ENCODE measurements at regions of chr2 and their contacts with region 1.

Region 1: DNA sequence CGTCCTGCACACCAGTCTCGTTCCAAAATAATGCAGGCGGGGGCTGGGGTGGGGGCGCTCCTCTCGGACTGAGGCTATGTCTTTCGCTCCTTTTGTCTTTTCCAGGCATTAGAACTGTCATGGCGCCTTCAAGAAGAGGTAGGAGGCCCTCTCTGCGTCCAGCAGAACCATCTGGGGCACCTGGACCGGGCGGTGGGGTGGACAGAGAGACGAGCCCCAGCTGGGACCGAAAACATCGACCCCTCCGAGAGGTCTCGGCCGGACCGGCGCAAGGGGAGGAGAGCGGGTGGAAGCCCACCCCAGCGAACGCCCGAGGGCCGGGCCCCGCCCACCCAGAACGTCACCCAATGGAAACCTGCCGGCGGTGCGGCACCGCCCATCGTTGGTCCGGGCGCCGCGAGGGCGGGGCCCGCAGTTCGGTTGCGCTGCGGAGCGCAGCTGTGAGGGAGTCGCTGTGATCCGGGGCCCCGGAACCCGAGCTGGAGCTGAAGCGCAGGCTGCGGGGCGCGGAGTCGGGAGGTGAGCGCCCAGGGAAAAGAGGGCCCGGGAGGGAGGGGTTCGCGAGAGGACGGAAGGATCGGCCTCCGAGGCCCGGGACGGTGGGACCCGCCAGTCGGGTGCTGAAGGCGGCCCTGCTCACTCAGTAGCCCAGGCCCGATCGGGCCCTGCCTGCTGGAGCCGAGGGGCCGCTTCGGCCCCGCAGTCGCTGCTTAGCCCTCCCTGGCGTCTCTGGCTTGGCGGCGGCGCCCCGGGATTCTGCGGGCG is at the start of gene NRBP1:
- DNase-seq: peak; percentile 89
- H3K4me3 ChIP-seq: peak within 1 kb of the TSS; percentile 68 to 93 (median 86)
- H3K27ac ChIP-seq: peak within 1 kb of the TSS; percentile 86
- H3K4me1 ChIP-seq: peaks cover 26% of the 10 kb centered on the region
- H3K27me3 ChIP-seq: no peaks in the 10 kb centered on the region
- CTCF ChIP-seq: no peak
- POLR2A ChIP-seq: peak; percentile 84
- total RNA-seq, gene NRBP1: 118 and 130 TPM in 2 replicates

Region 2: DNA sequence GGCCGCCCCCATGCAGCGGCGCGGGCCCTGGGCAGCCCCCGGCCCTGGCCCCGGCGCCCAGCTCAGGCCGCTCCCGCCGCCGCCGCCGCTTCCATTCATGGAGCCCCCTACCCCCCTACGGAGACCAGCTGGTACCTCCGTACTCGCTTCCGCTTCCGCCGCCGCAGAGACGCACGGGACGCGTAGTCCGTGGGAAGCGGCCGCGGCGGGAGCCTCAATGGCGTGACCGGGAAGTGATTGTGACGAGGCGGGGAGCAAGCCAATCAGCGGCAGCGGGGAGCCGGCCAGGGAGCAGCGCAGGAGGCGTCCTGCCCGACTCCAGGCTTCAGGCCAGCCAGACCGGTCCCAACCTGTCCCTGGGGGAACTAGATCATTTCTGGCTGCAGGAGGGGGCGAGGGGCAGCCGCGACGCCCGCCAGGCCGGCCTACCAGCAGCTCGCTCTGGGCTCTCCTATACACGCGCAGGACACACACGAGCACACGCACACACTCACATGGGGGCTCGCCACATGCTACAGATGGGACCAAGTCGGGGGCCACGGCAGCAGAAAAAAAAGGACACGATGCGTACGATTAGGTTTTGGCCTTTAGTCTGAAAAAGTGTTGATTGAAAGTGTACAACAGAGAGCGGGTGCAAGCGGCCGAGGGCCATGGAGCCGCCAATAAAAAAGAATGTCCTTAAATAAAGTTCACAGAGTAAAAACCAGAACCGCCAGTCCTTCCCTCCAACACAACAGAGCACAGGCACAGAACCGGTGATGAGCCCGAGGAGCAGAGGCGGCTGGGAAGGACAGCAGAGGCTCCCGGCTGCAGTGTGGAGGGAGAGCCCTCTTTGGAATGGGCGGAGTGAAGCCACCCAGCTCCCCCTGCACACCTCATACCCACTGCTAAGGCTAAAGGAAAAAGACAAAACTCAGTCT is 47.5 kb before region 1 on chr2 and contains the start of gene ZNF513:
- CTCF ChIA-PET with region 1: interaction called, 3 read pairs
- POLR2A ChIA-PET with region 1: no interaction called
- dilution Hi-C with region 1: no loop called
- intact Hi-C with region 1: loop called (anchors 2 kb)
- DNase-seq: peak; percentile 95
- H3K4me3 ChIP-seq: peak within 1 kb of the TSS; percentile 75 to 85 (median 77)
- H3K27ac ChIP-seq: peak within 1 kb of the TSS; percentile 97
- H3K4me1 ChIP-seq: peaks cover 17% of the 10 kb centered on the region
- H3K27me3 ChIP-seq: no peaks in the 10 kb centered on the region
- CTCF ChIP-seq: no peak
- POLR2A ChIP-seq: no peak
- total RNA-seq, gene ZNF513: 19.0 and 20.7 TPM in 2 replicates

Region 3: DNA sequence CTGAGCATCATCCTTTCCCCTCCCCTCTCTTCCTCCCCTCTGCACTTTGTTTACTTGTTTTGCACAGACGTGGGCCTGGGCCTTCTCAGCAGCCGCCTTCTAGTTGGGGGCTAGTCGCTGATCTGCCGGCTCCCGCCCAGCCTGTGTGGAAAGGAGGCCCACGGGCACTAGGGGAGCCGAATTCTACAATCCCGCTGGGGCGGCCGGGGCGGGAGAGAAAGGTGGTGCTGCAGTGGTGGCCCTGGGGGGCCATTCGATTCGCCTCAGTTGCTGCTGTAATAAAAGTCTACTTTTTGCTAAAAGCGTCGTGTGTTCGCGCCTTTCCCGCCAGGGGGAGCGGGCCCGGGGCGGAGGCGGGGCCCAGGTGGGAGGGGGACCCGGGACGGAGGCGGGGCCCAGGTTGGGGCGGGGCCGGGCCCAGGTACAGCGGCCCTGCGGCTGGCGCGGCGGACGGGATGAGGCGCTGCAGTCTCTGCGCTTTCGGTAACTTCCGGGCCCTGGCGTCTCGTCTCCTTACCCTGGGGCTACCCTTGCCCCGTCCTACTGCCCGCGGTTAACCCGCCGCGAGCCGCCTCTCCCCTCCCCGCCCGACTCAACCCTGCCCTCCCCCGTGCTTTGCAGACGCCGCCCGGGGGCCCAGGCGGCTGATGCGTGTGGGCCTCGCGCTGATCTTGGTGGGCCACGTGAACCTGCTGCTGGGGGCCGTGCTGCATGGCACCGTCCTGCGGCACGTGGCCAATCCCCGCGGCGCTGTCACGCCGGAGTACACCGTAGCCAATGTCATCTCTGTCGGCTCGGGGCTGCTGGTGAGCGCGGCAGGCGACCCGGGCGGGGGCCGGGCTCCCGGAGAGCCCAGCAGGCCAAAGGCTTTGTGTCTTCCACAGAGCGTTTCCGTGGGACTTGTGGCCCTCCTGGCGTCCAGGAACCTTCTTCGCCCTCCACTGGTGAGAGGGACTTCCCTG is 13.8 kb after region 1 on chr2 and contains the start of gene KRTCAP3:
- CTCF ChIA-PET with region 1: interaction called, 6 read pairs
- POLR2A ChIA-PET with region 1: no interaction called
- dilution Hi-C with region 1: no loop called
- intact Hi-C with region 1: loop called (anchors 1 kb)
- DNase-seq: no peak
- H3K4me3 ChIP-seq: no peak within 1 kb of the TSS
- H3K27ac ChIP-seq: no peak within 1 kb of the TSS
- H3K4me1 ChIP-seq: no peaks in the 10 kb centered on the region
- H3K27me3 ChIP-seq: no peaks in the 10 kb centered on the region
- CTCF ChIP-seq: no peak
- POLR2A ChIP-seq: no peak
- total RNA-seq, gene KRTCAP3: 4.0 and 4.6 TPM in 2 replicates

Region 4: GRCh38 chr2:27582695-27583389 is 154.4 kb after region 1 on chr2 and contains the start of gene ZNF512:
- CTCF ChIA-PET with region 1: no interaction called
- POLR2A ChIA-PET with region 1: no interaction called
- dilution Hi-C with region 1: no loop called
- intact Hi-C with region 1: loop called (anchors 5 kb)
- DNase-seq: peak; percentile 89
- H3K4me3 ChIP-seq: peak within 1 kb of the TSS; percentile 51 to 98 (median 94)
- H3K27ac ChIP-seq: peak within 1 kb of the TSS; percentile 77
- H3K4me1 ChIP-seq: peaks cover 24% of the 10 kb centered on the region
- H3K27me3 ChIP-seq: no peaks in the 10 kb centered on the region
- CTCF ChIP-seq: peak in 1 of 2 donors; percentile 7
- POLR2A ChIP-seq: peak; percentile 91
- total RNA-seq, gene ZNF512: 28.0 and 37.0 TPM in 2 replicates